ENCODE measurements at regions of chr7 and their contacts with region 1.

Region 1: DNA sequence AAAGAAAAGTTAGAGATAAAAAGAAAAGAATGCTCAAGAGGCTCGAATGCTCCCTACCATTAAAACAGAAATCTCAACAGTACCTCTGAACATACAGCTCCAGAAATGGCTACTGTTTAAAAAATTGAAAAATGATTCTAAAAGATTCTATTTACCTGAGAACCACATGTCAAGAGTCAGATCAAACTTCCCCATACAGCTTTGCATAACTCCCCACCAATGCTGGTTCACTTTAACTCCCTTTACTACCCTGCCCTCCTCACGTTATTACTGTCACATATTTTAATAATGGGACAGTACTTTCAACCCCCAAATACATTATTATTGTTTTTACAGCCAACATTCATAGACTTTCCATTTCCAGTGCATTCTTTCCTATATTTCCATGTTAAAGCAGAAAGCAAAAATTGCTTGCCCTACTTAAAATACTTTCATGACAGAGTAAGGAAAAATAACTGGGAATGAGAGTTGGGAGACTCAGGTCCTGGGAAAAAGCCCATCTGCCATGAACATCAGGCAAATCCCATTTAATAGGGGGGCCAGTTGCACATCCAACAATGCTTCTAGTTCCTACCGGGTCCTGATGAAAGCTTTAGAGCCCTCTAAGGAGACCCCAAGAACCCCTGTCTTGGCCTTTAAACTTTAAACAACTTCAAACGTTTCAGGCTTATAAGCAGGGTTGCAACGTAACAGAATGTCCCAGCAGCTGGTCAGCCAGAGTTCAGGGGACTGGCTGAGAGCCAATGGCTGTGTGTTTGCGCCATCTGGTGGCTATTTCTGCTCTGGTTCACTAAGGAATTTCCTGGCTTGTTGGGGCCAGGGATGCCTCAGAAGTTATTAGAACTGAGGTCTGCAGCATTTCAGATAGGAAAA is 247.4 kb downstream of the ELMO1 start:
- DNase-seq: peak; percentile 72 to 91 (median 80)
- ATAC-seq: peak; percentile 87
- H3K4me3 ChIP-seq: no peak overlapping the region
- H3K27ac ChIP-seq: peak overlapping the region in 1 of 2 donors; percentile 14
- H3K4me1 ChIP-seq: peaks cover 0 to 12% of the 10 kb centered on the region in 2 donors
- H3K27me3 ChIP-seq: no peaks in the 10 kb centered on the region
- CTCF ChIP-seq: peak; percentile 73 to 80

Region 2: DNA sequence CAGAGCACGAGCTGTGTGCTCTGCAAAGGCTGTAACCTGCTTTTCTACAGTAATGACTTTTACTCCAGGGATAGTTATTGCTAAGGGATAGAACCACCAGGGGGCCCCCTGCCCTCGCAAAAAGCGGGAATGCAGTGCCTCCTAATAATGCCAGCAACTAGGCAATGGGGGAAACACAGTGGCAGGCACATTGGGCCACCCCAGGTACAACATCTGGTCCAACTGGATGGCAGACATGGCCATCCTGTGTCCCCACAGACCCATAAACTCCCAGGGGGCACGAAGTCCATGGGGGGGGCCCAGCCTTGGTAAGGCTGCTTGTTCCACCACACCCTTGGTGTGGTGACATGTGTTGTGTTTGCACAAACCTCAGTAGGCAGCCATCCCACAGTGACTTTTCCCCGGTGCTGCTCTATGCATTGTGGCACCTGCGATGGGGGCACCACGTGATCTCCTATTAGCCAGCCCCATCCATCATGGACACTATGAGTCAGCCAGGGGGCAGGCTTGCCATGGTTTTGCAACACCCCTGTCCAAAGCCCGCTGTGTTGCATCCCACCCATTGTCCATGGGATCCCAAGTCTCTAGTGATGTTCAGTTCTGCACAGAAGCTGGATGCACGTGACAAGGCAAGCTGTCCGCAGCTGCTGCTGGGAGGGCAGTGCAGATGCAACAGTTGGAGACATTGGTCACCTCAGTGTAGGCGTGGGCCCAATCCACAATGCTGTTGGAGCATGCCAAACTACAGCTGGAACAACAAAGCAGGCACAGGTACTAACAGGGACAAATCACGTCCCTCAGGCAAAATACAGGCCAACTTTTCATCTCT is 727.6 kb before region 1 on chr7:
- intact Hi-C with region 1: loop called in 1 of 2 experiments (anchors 10 kb)
- DNase-seq: peak in 1 of 4 donors; percentile 28
- ATAC-seq: peak; percentile 53
- H3K4me3 ChIP-seq: no peak overlapping the region
- H3K27ac ChIP-seq: no peak overlapping the region
- H3K4me1 ChIP-seq: peaks cover 0 to 3% of the 10 kb centered on the region in 2 donors
- H3K27me3 ChIP-seq: no peaks in the 10 kb centered on the region
- CTCF ChIP-seq: peak in 1 of 2 donors; percentile 38

Region 3: GRCh38 chr7:36967387-36967786 is 233.9 kb before region 1 on chr7:
- intact Hi-C with region 1: loop called in 1 of 2 experiments (anchors 10 kb)
- DNase-seq: peak in 3 of 4 donors; percentile 55 to 75 (median 57)
- ATAC-seq: peak; percentile 94
- H3K4me3 ChIP-seq: no peak overlapping the region
- H3K27ac ChIP-seq: no peak overlapping the region
- H3K4me1 ChIP-seq: peaks cover 0 to 42% of the 10 kb centered on the region in 2 donors
- H3K27me3 ChIP-seq: no peaks in the 10 kb centered on the region
- CTCF ChIP-seq: peak; percentile 76 to 82

Region 4: DNA sequence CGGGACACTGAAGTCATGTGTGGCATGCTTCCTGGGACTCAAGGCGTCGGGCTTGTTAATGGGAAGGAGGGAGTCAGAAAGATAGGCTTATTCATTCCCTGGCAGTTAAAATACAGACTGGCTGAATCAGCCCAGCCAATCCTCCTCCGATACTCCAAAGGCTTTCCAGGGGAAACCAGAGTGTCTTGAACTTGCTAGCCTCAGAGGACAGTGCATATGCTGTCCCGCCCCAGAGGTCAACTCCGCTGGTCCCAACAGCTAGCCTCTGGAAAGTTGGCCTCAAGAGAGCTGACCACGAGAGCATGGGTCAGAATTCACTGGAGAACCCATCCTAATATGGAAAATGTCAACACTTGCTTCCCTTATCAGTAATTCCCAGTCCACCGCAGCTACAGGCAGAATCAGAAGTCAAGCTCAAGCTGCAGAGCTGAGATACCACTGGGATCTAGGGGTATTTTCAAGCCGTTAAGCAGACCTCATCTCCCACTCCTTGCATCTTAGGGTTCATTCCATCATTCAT is 204.4 kb after region 1 on chr7:
- intact Hi-C with region 1: no loop called
- DNase-seq: no peak
- ATAC-seq: peak; percentile 58
- H3K4me3 ChIP-seq: no peak overlapping the region
- H3K27ac ChIP-seq: no peak overlapping the region
- H3K4me1 ChIP-seq: peaks cover 9 to 43% of the 10 kb centered on the region in 2 donors
- H3K27me3 ChIP-seq: no peaks in the 10 kb centered on the region
- CTCF ChIP-seq: no peak

Region 5: GRCh38 chr7:37504801-37505200 is 303.6 kb after region 1 on chr7:
- intact Hi-C with region 1: no loop called
- DNase-seq: no peak
- ATAC-seq: no peak
- H3K4me3 ChIP-seq: no peak overlapping the region
- H3K27ac ChIP-seq: no peak overlapping the region
- H3K4me1 ChIP-seq: no peaks in the 10 kb centered on the region
- H3K27me3 ChIP-seq: no peaks in the 10 kb centered on the region
- CTCF ChIP-seq: no peak

Region 6: DNA sequence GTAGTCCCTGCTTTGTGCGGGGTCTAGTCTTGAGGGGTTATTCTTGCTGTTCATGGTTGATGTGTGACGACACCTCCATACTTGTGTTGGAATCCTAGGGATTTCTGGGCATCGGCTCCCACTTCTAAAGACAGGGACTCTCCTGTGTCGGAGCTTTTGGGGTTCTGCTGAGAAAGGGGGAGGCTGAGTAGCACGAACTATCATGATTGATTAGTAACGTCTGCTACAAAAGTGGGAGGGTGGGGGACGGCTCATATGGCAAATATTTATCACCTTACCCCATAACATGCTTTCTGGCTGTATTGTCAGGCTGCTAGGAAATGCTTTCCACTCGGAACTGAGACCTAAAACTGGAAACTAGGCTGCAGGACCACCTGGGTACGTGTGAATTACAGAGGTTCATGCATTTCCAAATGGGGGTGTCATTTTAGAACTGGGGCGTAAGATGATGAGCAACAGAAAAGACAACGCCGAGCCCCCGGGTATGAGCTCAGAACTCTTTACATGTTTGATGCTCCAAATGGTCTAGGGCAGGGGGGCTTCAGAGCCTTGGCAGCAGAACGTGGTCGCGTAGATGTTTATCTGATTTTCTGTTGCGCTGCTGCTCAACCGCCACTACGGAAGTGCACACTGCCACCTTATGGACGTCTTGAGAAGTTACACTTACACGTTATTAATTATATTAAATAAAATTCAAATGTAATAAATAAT is 632.0 kb after region 1 on chr7:
- intact Hi-C with region 1: loop called in 1 of 2 experiments (anchors 10 kb)
- DNase-seq: peak; percentile 41 to 70 (median 54)
- ATAC-seq: peak; percentile 85
- H3K4me3 ChIP-seq: peak overlapping the region; percentile 10 to 20
- H3K27ac ChIP-seq: no peak overlapping the region
- H3K4me1 ChIP-seq: peaks cover 0 to 12% of the 10 kb centered on the region in 2 donors
- H3K27me3 ChIP-seq: no peaks in the 10 kb centered on the region
- CTCF ChIP-seq: peak; percentile 58 to 73

Region 7: GRCh38 chr7:38607466-38607865 is 1406.2 kb after region 1 on chr7:
- intact Hi-C with region 1: no loop called
- DNase-seq: no peak
- ATAC-seq: no peak
- H3K4me3 ChIP-seq: no peak overlapping the region
- H3K27ac ChIP-seq: no peak overlapping the region
- H3K4me1 ChIP-seq: no peaks in the 10 kb centered on the region
- H3K27me3 ChIP-seq: no peaks in the 10 kb centered on the region
- CTCF ChIP-seq: no peak

Measured in left lung (tissue), 14 donors.